CD8-positive, alpha-beta memory T cell (primary cell): ENCODE measurements at regions of chr4 and their contacts with region 1.

Region 1: GRCh38 chr4:1899149-1900086 is 28.2 kb downstream of the NSD2 start:
- DNase-seq: peak; percentile 51 to 82 (median 68)
- H3K4me3 ChIP-seq: no peak overlapping the region
- H3K4me3 Mint-ChIP-seq: no peak overlapping the region
- H3K27ac ChIP-seq: no peak overlapping the region
- H3K27ac Mint-ChIP-seq: peak overlapping the region in 5 of 8 donors; percentile 4 to 77 (median 66)
- H3K4me1 ChIP-seq: peaks cover 5% of the 10 kb centered on the region
- H3K4me1 Mint-ChIP-seq: peaks cover 9 to 24% (median 14%) of the 10 kb centered on the region in 3 donors
- H3K27me3 ChIP-seq: no peaks in the 10 kb centered on the region
- H3K27me3 Mint-ChIP-seq: peaks cover 0 to 2% of the 10 kb centered on the region in 2 donors

Region 2: DNA sequence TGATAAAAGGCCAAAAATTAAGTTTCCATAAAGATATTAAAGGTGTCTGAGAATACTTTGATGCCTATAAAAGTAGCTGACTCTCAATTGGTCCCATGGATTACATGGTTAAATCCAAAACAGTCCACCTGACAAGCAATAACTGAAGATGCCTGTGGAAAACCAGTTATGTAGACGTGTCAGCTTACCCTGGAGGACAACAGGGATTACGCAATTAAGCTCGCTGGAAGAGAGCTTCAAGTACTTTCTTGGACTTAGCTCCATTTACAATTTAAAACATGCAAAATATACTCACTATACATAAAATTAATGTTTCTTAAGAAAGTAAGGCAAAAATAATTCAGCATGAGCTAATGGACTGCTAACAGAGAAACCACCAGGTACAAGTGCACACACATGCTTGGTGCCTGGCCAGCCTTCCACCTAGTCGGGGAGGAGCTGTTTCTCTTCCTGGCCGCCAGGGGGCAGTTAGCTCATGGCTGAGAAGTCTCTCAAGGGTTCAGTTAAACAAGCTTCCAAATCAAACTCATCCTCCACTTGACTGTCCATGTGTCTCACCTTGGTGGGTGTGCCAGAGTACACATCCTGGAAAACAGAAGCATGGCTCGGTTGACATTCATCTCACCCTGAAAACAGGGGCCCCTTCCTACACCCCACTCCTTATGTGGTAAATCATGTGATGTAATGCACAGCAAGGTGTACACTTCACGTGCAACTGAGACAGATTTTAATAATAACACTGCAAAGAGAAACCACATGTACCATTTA is 206.1 kb before region 1 on chr4:
- CTCF ChIA-PET with region 1: interaction called, 11 read pairs
- POLR2A ChIA-PET with region 1: no interaction called
- DNase-seq: peak; percentile 63 to 86 (median 74)
- H3K4me3 ChIP-seq: no peak overlapping the region
- H3K4me3 Mint-ChIP-seq: no peak overlapping the region
- H3K27ac ChIP-seq: no peak overlapping the region
- H3K27ac Mint-ChIP-seq: peak overlapping the region in 6 of 8 donors; percentile 51 to 87 (median 78)
- H3K4me1 ChIP-seq: no peaks in the 10 kb centered on the region
- H3K4me1 Mint-ChIP-seq: peaks cover 0 to 5% (median 3%) of the 10 kb centered on the region in 3 donors
- H3K27me3 ChIP-seq: no peaks in the 10 kb centered on the region
- H3K27me3 Mint-ChIP-seq: no peaks in the 10 kb centered on the region

Region 3: DNA sequence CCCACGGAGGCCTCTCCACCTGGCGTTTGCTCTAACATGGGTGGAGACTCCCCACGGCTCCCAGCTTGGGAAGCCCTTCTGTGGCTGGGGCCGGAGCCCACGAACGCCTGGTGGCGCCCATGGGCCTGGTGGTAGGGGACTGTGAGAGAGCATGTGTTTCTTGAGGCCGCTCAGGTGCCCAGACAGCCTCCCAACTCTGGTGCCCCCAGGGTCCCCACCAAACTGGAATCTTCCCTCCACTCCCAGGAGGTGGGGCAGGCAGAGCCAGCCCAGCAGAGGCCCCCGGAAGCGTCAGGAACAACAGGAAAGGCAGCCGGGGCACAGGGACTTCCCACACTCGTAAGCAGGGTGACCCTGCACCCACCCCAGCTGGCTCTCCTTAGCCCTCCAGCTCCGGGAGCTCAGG is 139.6 kb before region 1 on chr4:
- CTCF ChIA-PET with region 1: interaction called, 11 read pairs
- POLR2A ChIA-PET with region 1: no interaction called
- DNase-seq: no peak
- H3K4me3 ChIP-seq: no peak overlapping the region
- H3K4me3 Mint-ChIP-seq: no peak overlapping the region
- H3K27ac ChIP-seq: no peak overlapping the region
- H3K27ac Mint-ChIP-seq: no peak overlapping the region
- H3K4me1 ChIP-seq: no peaks in the 10 kb centered on the region
- H3K4me1 Mint-ChIP-seq: no peaks in the 10 kb centered on the region
- H3K27me3 ChIP-seq: no peaks in the 10 kb centered on the region
- H3K27me3 Mint-ChIP-seq: peaks cover 3% of the 10 kb centered on the region in 2 donors

Region 4: DNA sequence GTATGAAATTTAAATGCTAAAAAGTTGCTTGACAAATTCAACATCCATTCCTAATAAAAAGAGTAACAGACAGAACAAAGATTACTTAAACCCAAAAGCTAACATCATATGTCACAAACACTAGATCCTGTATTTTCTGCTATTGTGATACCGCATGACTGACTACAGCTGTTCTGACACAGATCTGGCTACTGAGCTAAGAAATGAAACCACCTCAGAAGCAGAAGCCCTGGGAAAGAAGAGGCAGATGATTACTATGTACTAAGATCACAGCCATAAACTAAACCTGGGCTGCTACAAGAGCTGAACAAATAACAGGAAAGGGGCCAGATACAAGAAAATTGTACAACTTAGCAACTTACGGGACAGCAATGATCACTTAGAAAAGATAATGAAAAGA is 52.8 kb before region 1 on chr4:
- CTCF ChIA-PET with region 1: interaction called, 10 read pairs
- POLR2A ChIA-PET with region 1: no interaction called
- DNase-seq: no peak
- H3K4me3 ChIP-seq: no peak overlapping the region
- H3K4me3 Mint-ChIP-seq: no peak overlapping the region
- H3K27ac ChIP-seq: no peak overlapping the region
- H3K27ac Mint-ChIP-seq: peak overlapping the region in 2 of 8 donors; percentile 0 to 50
- H3K4me1 ChIP-seq: no peaks in the 10 kb centered on the region
- H3K4me1 Mint-ChIP-seq: peaks cover 13 to 26% (median 16%) of the 10 kb centered on the region in 3 donors
- H3K27me3 ChIP-seq: no peaks in the 10 kb centered on the region
- H3K27me3 Mint-ChIP-seq: no peaks in the 10 kb centered on the region

Region 5: DNA sequence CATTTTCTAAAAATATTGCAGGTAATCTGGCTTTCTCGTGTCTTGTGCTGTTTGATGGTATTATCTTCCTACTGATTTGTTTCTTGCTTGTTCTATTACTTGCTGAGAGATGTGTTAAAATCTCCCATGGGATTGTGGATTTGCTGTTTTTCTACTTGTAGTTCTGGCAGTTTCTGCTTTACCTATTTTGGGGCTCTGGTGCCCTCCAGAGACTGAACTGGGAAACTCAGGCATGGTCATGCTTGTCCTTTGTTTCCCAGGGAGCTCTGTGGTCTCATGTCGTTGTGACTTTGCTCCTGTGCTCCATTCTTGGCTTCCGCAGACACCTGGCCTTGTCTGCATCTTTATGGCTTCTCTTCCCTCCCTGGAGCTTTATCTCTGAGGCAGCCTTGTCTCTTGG is 11.2 kb after region 1 on chr4:
- CTCF ChIA-PET with region 1: interaction called, 35 read pairs
- POLR2A ChIA-PET with region 1: no interaction called
- DNase-seq: no peak
- H3K4me3 ChIP-seq: no peak overlapping the region
- H3K4me3 Mint-ChIP-seq: no peak overlapping the region
- H3K27ac ChIP-seq: peak overlapping the region; percentile 9
- H3K27ac Mint-ChIP-seq: peak overlapping the region in 2 of 8 donors; percentile 45 to 83
- H3K4me1 ChIP-seq: peaks cover 6% of the 10 kb centered on the region
- H3K4me1 Mint-ChIP-seq: peaks cover 11 to 27% (median 11%) of the 10 kb centered on the region in 3 donors
- H3K27me3 ChIP-seq: no peaks in the 10 kb centered on the region
- H3K27me3 Mint-ChIP-seq: no peaks in the 10 kb centered on the region